Posterior vena cava (tissue), 2 donors: ENCODE measurements at regions of chr1 and their contacts with region 1.

Region 1: DNA sequence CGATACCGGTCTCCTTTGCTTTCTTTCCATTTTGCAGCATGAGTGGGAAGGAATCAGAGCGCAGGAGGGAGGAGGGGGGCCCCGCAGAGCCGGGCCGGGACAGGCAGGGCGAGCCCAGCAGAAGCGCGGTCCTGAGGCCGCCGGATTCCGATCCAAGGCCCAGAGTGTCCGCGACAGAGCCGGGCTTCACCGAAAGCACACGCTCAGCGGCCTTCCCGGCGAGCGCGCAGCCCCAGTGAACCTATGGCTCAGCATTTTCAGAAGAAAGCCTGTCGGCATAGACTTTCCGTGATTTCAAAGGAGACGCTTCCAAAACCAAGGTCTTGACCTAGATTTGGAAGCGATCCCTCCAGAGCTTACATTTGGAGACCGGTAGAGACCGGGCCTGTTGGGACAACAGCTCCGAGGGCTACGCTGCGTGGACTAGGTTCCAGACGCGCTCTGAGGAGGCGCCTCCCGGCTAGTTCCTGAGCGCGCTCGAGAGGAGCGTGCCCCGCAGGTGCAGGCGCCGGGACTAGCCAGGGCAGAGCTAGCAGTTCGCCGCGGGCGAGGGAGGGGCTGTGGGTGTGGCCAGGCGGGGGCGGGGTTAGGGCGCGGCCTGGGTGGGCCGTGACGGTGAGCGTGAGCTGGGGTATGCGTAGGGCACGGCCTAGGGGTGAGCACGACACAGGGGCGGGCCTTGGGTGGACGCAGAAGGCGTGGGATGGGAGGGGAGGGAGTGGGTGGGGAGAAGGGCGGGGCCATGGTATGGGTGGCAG is 27.8 kb upstream of the PRSS38 start:
- DNase-seq: peak; percentile 96

Region 2: DNA sequence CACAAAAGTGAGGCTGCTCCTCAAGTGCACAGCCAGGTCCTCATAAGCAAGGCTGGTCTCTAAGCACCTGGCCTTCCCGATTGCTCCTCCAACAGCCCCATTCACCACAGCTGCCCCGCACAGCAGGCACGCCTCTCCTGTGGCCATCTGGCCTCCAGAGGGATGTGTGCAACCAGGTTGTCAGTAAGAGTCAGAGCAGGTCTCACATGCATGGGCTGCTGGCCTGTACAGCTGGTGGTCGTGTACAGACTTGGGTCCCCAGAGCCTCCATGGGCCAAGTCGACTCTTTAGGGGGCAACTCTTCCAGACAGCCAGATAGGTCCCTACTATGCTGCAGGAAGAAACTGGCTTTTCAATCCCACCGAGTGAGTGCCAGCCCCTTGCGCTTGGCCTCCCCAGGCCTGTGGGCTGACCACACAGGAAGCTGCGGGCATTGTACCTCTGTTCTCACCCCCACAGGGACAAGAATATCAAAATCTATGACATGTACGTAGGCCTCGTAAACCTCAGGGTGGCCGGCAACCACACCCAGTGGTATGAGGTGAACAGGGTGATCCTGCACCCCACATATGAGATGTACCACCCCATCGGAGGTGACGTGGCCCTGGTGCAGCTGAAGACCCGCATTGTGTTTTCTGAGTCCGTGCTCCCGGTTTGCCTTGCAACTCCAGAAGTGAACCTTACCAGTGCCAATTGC is 29.2 kb after region 1 on chr1:
- intact Hi-C with region 1: loop called in 1 of 2 experiments (anchors 1 kb)
- DNase-seq: no peak

Region 3: DNA sequence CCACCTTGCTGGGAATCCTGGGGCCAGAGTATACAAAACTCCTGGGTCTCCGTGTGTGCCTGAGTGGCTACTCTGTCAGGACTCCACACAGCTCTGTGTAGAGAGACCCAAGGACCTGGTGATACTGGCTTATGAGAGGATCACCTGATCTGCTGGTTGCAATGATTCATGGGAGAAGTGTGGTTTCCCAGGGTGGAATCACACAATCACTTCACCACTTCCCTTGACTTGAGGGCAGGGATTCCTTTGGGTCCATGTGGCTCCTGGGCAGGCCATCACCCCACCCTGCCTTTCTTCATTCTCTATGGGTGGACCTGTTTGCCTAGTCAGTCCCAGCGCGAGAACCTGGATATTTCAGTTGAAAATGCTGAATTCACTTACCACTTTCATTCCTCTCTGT is 41.1 kb after region 1 on chr1:
- intact Hi-C with region 1: no loop called
- DNase-seq: no peak

Region 4: DNA sequence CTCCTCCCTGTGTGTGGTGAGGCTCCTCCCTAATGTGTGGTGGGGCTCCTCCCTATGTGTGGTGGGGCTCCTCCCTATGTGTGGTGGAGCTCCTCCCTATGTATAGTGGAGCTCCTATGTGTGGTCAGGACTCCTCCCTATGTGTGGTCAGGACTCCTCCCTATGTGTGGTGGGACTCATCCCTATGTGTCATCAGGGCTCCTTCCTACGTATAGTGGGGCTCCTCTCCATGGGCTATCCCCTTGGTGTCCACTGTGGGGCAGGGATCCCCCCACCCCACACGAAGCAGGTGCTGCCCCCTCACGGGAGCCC is 57.4 kb after region 1 on chr1:
- intact Hi-C with region 1: no loop called
- DNase-seq: no peak

Region 5: GRCh38 chr1:228727681-228728171 is 940.0 kb after region 1 on chr1:
- intact Hi-C with region 1: no loop called
- DNase-seq: no peak